ENCODE measurements at regions of chr13 and their contacts with region 1.

Region 1: GRCh38 chr13:31236211-31236786 is 36.5 kb downstream of the B3GLCT start:
- DNase-seq: peak; percentile 15
- H3K4me3 ChIP-seq: no peak overlapping the region
- H3K27ac ChIP-seq: no peak overlapping the region
- H3K27me3 ChIP-seq: no peaks in the 10 kb centered on the region
- CTCF ChIP-seq: peak; percentile 81

Region 2: DNA sequence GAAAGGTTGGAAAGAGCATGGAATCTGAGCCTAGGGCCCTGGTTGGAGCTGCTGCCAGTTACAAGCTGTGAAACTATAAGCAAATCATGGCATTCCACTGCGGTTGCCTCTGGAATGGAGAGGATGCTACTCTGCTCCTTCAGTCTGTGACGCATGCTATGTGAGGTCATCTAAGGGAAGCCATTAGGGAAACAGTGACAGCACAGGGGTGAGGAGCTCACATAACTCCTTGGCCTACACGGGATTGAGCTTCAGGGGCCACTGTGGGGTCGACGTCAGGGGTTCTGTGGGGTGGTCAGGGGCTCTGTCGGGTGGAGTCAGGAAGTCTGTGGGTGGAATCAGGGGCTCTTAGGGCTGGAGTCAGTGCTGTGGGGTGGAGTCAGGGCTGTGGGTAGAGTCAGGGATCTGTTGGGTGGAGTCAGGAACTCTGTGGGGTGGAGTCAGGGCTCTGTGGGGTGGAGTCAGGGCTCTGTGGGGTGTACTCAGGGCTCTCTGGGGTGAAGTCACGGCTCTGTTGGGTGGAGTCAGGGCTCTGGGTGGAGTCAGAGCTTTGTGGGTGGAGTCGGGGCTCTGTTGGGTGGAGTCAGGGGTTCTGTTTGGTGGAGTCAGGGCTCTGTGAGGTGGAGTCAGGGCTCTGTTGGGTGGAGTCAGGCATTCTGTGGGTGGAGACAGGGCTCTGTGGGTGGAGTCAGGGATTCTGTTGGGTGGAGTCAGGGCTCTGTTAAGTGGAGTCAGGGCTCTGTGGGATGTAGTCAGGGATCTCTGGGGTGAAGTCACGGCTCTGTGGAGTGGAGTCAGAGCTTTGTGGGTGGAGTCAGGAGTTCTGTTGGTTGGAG is 366.0 kb before region 1 on chr13:
- CTCF ChIA-PET with region 1: no interaction called
- POLR2A ChIA-PET with region 1: no interaction called
- DNase-seq: peak; percentile 99
- H3K4me3 ChIP-seq: peak overlapping the region; percentile 41
- H3K27ac ChIP-seq: peak overlapping the region; percentile 100
- H3K27me3 ChIP-seq: no peaks in the 10 kb centered on the region
- CTCF ChIP-seq: no peak

Region 3: DNA sequence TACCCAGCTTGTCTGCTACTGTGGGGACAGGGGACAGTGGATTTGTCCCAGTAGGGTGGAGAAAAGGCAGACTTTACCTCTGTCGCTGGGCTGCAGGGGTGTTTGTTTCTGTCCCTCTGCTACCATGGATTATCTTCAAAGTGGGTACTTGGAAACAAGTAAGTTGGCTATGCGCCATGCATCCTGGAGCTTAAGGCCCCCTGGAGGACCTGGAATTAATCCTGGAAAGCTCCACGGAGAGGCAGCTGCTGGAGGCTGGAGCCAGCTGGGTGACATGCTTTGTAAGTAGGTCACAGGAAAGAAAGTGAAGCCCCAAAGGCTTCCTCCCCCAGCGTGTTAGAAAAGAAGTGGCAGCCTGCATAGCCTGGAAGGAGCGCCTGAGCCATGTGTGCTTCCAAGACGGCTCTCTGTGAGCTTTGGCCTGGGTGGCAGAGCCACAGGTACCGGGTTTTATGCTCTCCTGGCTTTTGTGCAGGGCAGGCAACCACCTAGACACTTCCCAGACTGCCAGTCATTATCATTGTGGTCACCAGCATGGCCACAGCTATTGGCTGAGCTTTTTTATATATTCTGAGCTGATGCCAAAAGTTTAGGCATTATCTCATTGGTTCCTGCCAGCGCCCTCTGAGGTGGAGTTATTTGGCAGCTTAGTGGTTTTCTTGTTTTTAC is 27.0 kb before region 1 on chr13:
- CTCF ChIA-PET with region 1: interaction called, 14 read pairs
- POLR2A ChIA-PET with region 1: no interaction called
- DNase-seq: no peak
- H3K4me3 ChIP-seq: no peak overlapping the region
- H3K27ac ChIP-seq: no peak overlapping the region
- H3K27me3 ChIP-seq: no peaks in the 10 kb centered on the region
- CTCF ChIP-seq: no peak

Region 4: DNA sequence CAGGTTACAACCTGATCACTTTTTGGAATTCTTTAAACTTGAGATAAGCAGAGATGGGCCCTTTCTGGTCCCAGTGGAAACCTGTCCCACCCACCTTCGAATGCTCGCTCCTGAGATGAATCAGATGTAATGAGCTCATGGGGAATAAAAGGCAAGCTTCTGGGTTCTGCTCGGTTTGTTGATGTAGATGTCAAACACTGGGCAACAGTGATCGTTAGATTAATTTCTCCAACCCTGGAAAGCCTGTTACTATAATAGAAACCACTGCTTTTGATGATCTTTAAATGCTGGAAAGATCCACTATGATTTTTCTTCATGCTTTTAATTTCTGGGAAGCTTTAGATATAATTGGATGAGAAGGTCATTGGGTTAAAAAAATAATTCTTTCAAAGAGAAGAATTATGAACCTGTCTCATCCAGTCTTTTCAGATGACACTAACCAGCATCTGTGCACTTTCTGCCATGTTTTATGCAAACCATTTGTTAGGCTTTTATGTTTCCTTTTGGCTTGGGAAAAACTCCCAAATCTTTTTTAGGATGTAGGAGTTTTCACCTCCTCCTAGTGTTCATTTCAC is 12.8 kb after region 1 on chr13:
- CTCF ChIA-PET with region 1: interaction called, 108 read pairs
- POLR2A ChIA-PET with region 1: no interaction called
- DNase-seq: no peak
- H3K4me3 ChIP-seq: no peak overlapping the region
- H3K27ac ChIP-seq: no peak overlapping the region
- H3K27me3 ChIP-seq: no peaks in the 10 kb centered on the region
- CTCF ChIP-seq: no peak

Region 5: DNA sequence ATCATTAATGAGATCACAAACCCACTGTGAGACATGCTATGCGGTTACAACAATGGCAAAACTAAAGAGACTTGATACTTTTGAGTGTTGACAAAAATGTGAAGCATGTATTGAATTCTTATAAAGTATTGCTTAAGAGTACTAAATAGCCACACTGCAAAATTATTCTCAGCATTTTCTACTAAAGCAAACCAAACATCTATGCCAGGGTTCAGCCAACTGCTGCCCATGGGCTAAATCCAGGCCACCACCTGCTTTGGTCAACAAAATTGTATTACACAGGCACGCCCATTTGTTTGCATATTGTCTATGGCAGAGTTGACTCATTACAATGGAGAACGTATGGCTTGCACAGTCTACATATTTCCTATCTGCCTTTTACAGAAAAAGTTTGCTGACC is 98.8 kb after region 1 on chr13:
- CTCF ChIA-PET with region 1: no interaction called
- POLR2A ChIA-PET with region 1: no interaction called
- DNase-seq: no peak
- H3K4me3 ChIP-seq: no peak overlapping the region
- H3K27ac ChIP-seq: no peak overlapping the region
- H3K27me3 ChIP-seq: no peaks in the 10 kb centered on the region
- CTCF ChIP-seq: no peak

Region 6: GRCh38 chr13:31409678-31410356 is 173.5 kb after region 1 on chr13:
- CTCF ChIA-PET with region 1: interaction called, 24 read pairs
- POLR2A ChIA-PET with region 1: no interaction called
- DNase-seq: no peak
- H3K4me3 ChIP-seq: no peak overlapping the region
- H3K27ac ChIP-seq: no peak overlapping the region
- H3K27me3 ChIP-seq: peaks cover 8% of the 10 kb centered on the region
- CTCF ChIP-seq: peak; percentile 34

Region 7: GRCh38 chr13:31742097-31742734 is 505.9 kb after region 1 on chr13:
- CTCF ChIA-PET with region 1: interaction called, 16 read pairs
- POLR2A ChIA-PET with region 1: no interaction called
- DNase-seq: peak; percentile 42
- H3K4me3 ChIP-seq: no peak overlapping the region; the same call in none of the 2 replicates
- H3K27ac ChIP-seq: no peak overlapping the region
- H3K27me3 ChIP-seq: no peaks in the 10 kb centered on the region
- CTCF ChIP-seq: peak; percentile 99